HCT116 (cell line): ENCODE measurements at regions of chr15 and their contacts with region 1.

Region 1: GRCh38 chr15:68372291-68372811 is 59.6 kb downstream of the ITGA11 start:
- DNase-seq: peak; percentile 18
- ATAC-seq: peak; percentile 100
- H3K4me3 ChIP-seq: peak overlapping the region in 1 of 2 experiments; percentile 19; a peak in 3 of 4 replicates
- H3K27ac ChIP-seq: 0 out of 2 replicates have a peak overlapping the region, but pooled peaks have one; percentile 15
- H3K4me1 ChIP-seq: peaks cover 3 to 10% of the 10 kb centered on the region in 2 experiments; a peak in 3 of 4 replicates
- H3K27me3 ChIP-seq: no peaks in the 10 kb centered on the region
- CTCF ChIP-seq: peak; percentile 39 to 77 (median 64); a peak in 5 of 6 replicates
- POLR2A ChIP-seq: no peak
- RAD21 ChIP-seq: peak; percentile 47

Region 2: GRCh38 chr15:67426901-67427300 is 945.5 kb before region 1 on chr15:
- CTCF ChIA-PET with region 1: no interaction called
- POLR2A ChIA-PET with region 1: no interaction called
- RAD21 ChIA-PET with region 1: no interaction called
- intact Hi-C with region 1: no loop called
- DNase-seq: no peak
- ATAC-seq: no peak
- H3K4me3 ChIP-seq: no peak overlapping the region
- H3K27ac ChIP-seq: no peak overlapping the region
- H3K4me1 ChIP-seq: no peaks in the 10 kb centered on the region
- H3K27me3 ChIP-seq: no peaks in the 10 kb centered on the region
- CTCF ChIP-seq: no peak
- POLR2A ChIP-seq: no peak
- RAD21 ChIP-seq: no peak

Region 3: GRCh38 chr15:68252925-68253534 is 119.3 kb before region 1 on chr15:
- CTCF ChIA-PET with region 1: no interaction called
- POLR2A ChIA-PET with region 1: no interaction called
- RAD21 ChIA-PET with region 1: no interaction called
- intact Hi-C with region 1: loop called (anchors 1 kb)
- DNase-seq: peak; percentile 79
- ATAC-seq: peak; percentile 97
- H3K4me3 ChIP-seq: no peak overlapping the region
- H3K27ac ChIP-seq: no peak overlapping the region
- H3K4me1 ChIP-seq: no peaks in the 10 kb centered on the region
- H3K27me3 ChIP-seq: no peaks in the 10 kb centered on the region
- CTCF ChIP-seq: peak; percentile 78 to 88 (median 87)
- POLR2A ChIP-seq: no peak
- RAD21 ChIP-seq: peak; percentile 90

Region 4: GRCh38 chr15:68328964-68329363 is 43.4 kb before region 1 on chr15:
- CTCF ChIA-PET with region 1: no interaction called
- POLR2A ChIA-PET with region 1: no interaction called
- RAD21 ChIA-PET with region 1: no interaction called
- intact Hi-C with region 1: loop called (anchors 1 kb)
- DNase-seq: no peak
- ATAC-seq: no peak
- H3K4me3 ChIP-seq: no peak overlapping the region
- H3K27ac ChIP-seq: no peak overlapping the region
- H3K4me1 ChIP-seq: peaks cover 0 to 5% of the 10 kb centered on the region in 2 experiments; a peak in 2 of 4 replicates
- H3K27me3 ChIP-seq: peaks cover 4% of the 10 kb centered on the region; the same call in 1 of the 2 replicates
- CTCF ChIP-seq: no peak
- POLR2A ChIP-seq: no peak
- RAD21 ChIP-seq: no peak

Region 5: GRCh38 chr15:68820295-68821189 is 448.2 kb after region 1 on chr15 and contains the start of gene ANP32A:
- CTCF ChIA-PET with region 1: no interaction called
- POLR2A ChIA-PET with region 1: no interaction called
- RAD21 ChIA-PET with region 1: no interaction called
- intact Hi-C with region 1: no loop called
- DNase-seq: peak; percentile 84
- ATAC-seq: peak; percentile 75
- H3K4me3 ChIP-seq: peak within 1 kb of the TSS; percentile 72 to 82
- H3K27ac ChIP-seq: peak within 1 kb of the TSS; percentile 96
- H3K4me1 ChIP-seq: peaks cover 9 to 32% of the 10 kb centered on the region in 2 experiments
- H3K27me3 ChIP-seq: no peaks in the 10 kb centered on the region
- CTCF ChIP-seq: no peak
- POLR2A ChIP-seq: peak; percentile 66
- RAD21 ChIP-seq: no peak
- total RNA-seq, gene ANP32A: 220 TPM

Region 6: DNA sequence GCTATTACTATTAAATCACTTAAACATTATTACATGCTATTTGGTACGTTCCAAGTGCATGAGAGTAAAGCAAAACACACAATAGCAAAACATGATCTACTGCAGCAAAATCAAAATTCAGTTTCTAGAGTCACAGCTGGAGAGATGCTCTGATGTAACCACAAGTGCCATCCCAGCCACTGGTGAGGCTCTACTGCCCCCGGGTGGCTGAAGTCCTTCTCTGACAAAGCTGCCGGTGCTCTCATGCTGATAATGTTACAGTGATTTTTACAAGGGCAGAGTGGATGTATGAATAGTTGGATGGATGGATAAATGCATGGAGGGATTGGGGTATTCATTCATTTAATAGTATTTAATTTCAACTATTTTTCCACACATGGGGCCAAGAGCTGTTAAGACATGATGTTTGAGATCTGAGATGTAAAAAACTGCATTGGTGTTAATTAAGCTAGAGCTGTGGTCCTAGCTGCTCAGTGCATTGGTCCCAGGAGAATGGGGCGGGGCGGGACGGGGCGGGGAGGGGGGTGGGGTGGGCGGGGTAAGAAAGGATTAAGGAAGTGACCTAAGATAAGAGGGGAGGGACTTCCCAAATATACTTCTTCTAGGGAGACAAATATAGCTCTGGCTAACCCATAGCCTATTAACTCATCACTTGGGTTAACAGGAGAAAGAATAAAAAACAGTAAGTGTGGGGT is 552.7 kb after region 1 on chr15:
- CTCF ChIA-PET with region 1: no interaction called
- POLR2A ChIA-PET with region 1: no interaction called
- RAD21 ChIA-PET with region 1: no interaction called
- intact Hi-C with region 1: no loop called
- DNase-seq: peak; percentile 66
- ATAC-seq: peak; percentile 96
- H3K4me3 ChIP-seq: peak overlapping the region; percentile 16 to 19; a peak in 1 of 4 replicates
- H3K27ac ChIP-seq: no peak overlapping the region
- H3K4me1 ChIP-seq: peaks cover 3 to 4% of the 10 kb centered on the region in 2 experiments; a peak in 1 of 4 replicates
- H3K27me3 ChIP-seq: no peaks in the 10 kb centered on the region
- CTCF ChIP-seq: peak; percentile 80 to 96 (median 91)
- POLR2A ChIP-seq: no peak
- RAD21 ChIP-seq: peak; percentile 94